H1 (cell line): ENCODE measurements at regions of chr15 and their contacts with region 1.

Region 1: DNA sequence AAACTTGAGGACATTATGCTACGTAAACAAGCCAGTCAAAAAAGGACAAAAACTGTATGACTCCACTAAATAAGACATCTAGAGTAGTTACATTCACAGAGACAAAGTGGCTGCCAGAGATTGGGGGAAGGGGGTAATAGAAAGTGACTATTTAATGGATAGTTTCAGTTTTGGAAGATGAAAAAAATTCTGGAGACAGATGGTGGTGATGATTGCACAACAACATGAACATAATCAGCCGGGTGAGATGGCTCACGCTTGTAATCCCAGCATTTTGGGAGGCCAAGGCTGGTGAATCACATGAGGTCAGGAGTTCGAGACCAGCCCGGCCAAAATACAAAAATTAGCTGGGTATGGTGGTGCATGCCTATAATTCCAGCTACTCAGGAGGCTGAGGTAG is 40.6 kb downstream of the DPP8 start:
- DNase-seq: no peak
- H3K4me3 ChIP-seq: no peak overlapping the region
- H3K27ac ChIP-seq: no peak overlapping the region
- H3K4me1 ChIP-seq: no peaks in the 10 kb centered on the region
- H3K27me3 ChIP-seq: no peaks in the 10 kb centered on the region
- CTCF ChIP-seq: no peak
- EP300 ChIP-seq: no peak
- POLR2A ChIP-seq: no peak
- RAD21 ChIP-seq: no peak

Region 2: GRCh38 chr15:65494071-65494470 is 17.2 kb after region 1 on chr15:
- CTCF ChIA-PET with region 1: interaction called, 12 read pairs
- POLR2A ChIA-PET with region 1: no interaction called
- DNase-seq: no peak
- H3K4me3 ChIP-seq: no peak overlapping the region
- H3K27ac ChIP-seq: no peak overlapping the region
- H3K4me1 ChIP-seq: no peaks in the 10 kb centered on the region
- H3K27me3 ChIP-seq: no peaks in the 10 kb centered on the region
- CTCF ChIP-seq: no peak
- EP300 ChIP-seq: no peak
- POLR2A ChIP-seq: no peak
- RAD21 ChIP-seq: no peak

Region 3: GRCh38 chr15:65509321-65509720 is 32.4 kb after region 1 on chr15:
- CTCF ChIA-PET with region 1: no interaction called
- POLR2A ChIA-PET with region 1: no interaction called
- DNase-seq: no peak
- H3K4me3 ChIP-seq: no peak overlapping the region
- H3K27ac ChIP-seq: no peak overlapping the region
- H3K4me1 ChIP-seq: no peaks in the 10 kb centered on the region
- H3K27me3 ChIP-seq: no peaks in the 10 kb centered on the region
- CTCF ChIP-seq: no peak
- EP300 ChIP-seq: no peak
- POLR2A ChIP-seq: no peak
- RAD21 ChIP-seq: no peak